Activated CD8-positive, alpha-beta T cell treated with anti-CD3 and anti-CD28 coated beads, Interleukin-2, amount 10 ng/mL, durations not matched to agents 7 days and 5 days (primary cell): ENCODE measurements at regions of chr20 and their contacts with region 1.

Region 1: GRCh38 chr20:13302647-13303450 is 81.8 kb downstream of the ISM1 start:
- DNase-seq: peak; percentile 70
- ATAC-seq: peak; percentile 90
- H3K4me3 Mint-ChIP-seq: no peak overlapping the region
- H3K27ac Mint-ChIP-seq: no peak overlapping the region
- H3K4me1 Mint-ChIP-seq: no peaks in the 10 kb centered on the region
- H3K27me3 Mint-ChIP-seq: peaks cover 3% of the 10 kb centered on the region

Region 2: DNA sequence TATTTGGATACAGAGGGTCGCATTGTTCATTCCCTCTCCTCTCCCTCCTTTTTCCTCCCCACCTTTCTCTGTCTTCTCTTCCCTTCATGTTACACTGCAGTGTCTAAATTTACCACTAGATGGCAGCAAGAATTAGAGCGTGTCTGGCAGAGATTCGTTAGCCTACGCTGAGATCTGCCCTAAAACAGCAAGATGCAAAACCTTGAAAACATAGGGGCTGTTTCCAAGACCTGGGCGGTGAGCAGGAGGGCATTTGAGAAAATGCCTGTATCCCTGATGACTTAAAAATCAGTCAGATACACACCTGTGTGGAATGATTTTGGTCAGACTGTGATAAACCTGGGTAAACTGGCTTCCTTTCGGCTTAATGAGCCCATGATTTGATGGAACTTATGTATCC is 183.3 kb before region 1 on chr20:
- CTCF ChIA-PET with region 1: interaction called, 25 read pairs
- POLR2A ChIA-PET with region 1: no interaction called
- DNase-seq: peak; percentile 58
- ATAC-seq: peak; percentile 86
- H3K4me3 Mint-ChIP-seq: no peak overlapping the region
- H3K27ac Mint-ChIP-seq: no peak overlapping the region
- H3K4me1 Mint-ChIP-seq: no peaks in the 10 kb centered on the region
- H3K27me3 Mint-ChIP-seq: no peaks in the 10 kb centered on the region

Region 3: DNA sequence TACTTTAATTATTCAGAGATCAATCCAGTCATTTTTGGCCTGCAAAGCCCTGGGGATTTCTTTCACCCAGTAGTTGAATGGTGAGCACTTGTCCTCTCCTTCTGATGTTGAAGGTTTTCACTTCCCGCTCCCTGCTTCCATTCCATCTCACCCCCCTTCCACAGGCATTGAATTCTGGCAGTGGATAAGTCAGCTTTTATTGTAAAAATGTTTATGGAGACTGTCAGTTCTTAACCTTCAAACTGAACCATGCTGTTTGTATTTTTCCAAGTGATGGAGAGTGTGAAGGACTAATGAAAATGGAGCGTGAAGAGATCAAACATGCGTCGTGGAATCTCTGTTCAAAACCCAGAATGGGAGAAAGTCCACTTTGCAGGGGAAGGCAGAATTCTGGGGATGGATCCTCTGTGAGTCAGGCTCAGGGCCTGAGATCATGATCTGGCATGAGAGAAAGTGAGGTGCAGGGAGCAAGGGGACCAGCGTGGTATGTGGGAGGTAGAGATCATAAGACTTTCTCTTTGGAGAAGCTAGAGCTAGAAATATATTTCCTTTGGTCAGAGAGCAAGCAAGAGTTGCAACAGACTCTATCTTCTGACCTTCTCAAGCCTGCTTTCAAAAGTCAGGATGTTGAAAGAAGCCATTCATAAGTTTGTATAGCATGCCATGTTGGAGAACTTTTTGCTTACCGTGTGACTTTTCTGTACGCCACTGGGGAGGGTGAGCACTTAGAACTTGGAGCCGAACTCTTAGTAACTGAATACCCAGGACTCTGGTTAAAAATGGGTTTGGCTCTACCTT is 51.5 kb before region 1 on chr20:
- CTCF ChIA-PET with region 1: interaction called, 10 read pairs
- POLR2A ChIA-PET with region 1: no interaction called
- DNase-seq: no peak
- ATAC-seq: no peak
- H3K4me3 Mint-ChIP-seq: no peak overlapping the region
- H3K27ac Mint-ChIP-seq: no peak overlapping the region
- H3K4me1 Mint-ChIP-seq: peaks cover 36% of the 10 kb centered on the region
- H3K27me3 Mint-ChIP-seq: no peaks in the 10 kb centered on the region

Region 4: GRCh38 chr20:13286607-13287006 is 16.2 kb before region 1 on chr20:
- CTCF ChIA-PET with region 1: no interaction called
- POLR2A ChIA-PET with region 1: no interaction called
- DNase-seq: no peak
- ATAC-seq: no peak
- H3K4me3 Mint-ChIP-seq: no peak overlapping the region
- H3K27ac Mint-ChIP-seq: no peak overlapping the region
- H3K4me1 Mint-ChIP-seq: peaks cover 5% of the 10 kb centered on the region
- H3K27me3 Mint-ChIP-seq: no peaks in the 10 kb centered on the region